ENCODE measurements at regions of chr2 and their contacts with region 1.

Region 1: DNA sequence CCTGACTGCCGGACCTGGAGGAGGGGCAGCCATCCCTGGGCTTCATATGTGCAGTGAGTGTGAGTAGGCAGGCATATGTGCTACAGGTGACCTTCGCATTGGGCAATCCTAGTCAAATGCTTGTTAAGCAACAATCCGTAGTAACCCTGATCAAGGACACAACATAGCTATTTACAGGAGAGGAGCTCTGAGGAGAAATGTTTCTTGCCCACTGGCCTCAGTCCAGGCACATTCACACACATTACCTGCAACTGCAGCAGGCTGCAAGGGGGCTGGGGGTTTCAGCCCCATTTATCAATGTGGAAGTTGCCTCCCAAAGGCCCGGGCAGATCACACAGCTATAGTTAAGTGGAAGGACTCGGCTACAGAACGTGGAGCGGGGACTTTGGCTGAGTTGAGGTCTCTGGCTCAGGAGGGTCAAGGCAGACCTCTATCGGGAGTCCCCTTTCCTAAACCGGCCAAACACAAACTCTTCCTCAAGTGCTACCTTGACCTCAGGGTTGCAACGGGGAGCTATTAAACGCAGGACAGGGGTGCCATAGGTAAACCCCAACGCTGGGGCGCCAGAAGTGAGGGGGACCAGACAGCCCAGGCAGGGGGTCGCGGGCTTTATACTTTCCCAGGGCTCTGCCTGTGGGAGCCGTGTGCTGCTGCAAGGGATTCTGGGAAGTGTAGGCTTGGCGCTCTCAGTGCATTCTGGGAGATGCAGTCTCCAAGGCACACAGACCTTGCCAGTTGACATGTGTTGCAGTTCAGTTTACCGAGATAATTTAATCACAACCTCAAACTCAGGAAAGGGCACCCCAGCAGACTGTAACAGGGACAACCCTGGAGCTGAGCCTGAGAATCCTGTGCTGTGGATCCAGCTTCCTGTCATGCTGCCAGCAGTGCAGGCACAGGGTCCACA is 9.4 kb downstream of the KHK start:
- DNase-seq: no peak

Region 2: GRCh38 chr2:27191053-27191829 is 95.2 kb after region 1 on chr2:
- intact Hi-C with region 1: loop called (anchors 2 kb)
- DNase-seq: no peak

Region 3: GRCh38 chr2:27211829-27212627 is 116.0 kb after region 1 on chr2 and contains the starts of genes ATRAID and SLC5A6:
- intact Hi-C with region 1: loop called (anchors 5 kb)
- DNase-seq: peak; percentile 95
- total RNA-seq, gene ATRAID: 131 TPM
- total RNA-seq, gene SLC5A6: 11.4 TPM

Region 4: DNA sequence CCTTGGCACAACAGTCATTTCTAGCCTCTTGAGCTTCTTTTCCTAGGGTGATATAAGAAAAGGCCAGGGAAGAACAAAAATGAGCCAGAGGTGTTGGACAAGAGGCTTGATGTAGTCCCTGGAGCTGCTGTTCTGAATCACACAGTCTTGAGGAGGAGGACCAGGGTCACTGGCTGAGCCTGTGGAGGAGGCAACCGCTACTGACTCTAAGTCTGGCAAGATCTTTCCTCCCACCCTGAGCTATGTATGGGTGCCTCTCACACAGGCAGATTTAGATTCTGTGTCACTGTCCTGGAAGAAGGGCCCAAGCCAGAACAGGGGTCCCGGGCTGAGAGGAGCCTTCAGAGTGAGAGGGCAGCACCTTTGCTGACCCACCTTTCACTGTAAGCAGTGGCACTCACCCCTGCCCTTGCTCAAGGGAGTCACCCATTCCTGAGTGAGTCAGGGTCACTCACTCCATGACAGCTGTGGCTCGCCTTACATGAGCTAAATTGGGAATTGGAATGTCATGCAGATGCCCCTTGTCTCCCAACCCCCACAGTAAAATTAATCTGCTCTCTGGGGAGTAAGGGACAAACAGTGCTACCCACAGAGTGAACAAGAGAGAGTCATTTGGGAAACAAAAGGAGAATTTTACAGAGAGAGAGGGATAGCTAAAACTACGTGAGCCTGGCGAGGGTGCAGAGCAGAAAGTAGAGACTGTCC is 186.0 kb after region 1 on chr2 and contains the start of gene TRIM54:
- intact Hi-C with region 1: loop called (anchors 5 kb)
- DNase-seq: no peak
- total RNA-seq, gene TRIM54: 218 TPM

Region 5: GRCh38 chr2:27303093-27304025 is 207.4 kb after region 1 on chr2:
- intact Hi-C with region 1: loop called (anchors 5 kb)
- DNase-seq: no peak

Measured in cardiac septum (tissue), 1 donor.